ENCODE measurements at regions of chr10 and their contacts with region 1.

Region 1: DNA sequence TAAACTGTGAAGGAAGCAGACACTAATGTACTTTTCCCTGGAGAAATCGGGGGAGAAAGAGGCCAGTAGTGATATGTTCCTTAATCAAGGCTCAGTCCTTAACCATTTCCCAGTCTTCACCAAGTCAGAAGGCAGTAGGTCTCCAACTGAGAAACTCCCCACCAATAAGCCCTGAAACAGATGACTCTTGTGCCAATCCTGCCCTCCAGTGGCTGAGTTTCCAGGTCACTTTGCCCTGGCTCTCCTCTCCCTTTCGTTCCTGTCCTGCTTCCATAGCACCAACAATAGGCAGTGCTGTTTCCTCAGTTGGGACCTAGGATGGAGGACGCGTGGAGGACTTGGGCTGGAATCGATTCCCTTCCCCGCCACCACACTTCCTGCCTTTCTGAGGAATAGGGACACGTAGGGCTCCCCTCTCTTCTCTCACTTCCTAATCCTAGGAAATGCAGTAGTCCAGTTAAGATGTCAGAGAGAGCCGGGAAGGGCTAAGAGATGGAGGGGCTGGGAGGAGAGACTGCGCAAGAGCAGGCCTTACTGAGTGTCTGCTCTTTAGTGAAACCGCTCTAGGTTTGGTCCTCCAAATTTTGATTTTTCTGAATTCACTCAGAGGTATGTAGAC is 23.4 kb downstream of the ATOH7 start:
- DNase-seq: peak; percentile 81
- ATAC-seq: peak; percentile 97
- H3K4me3 ChIP-seq: no peak overlapping the region
- H3K27ac ChIP-seq: no peak overlapping the region
- H3K4me1 ChIP-seq: peaks cover 0 to 7% of the 10 kb centered on the region in 2 experiments; a peak in 1 of 4 replicates
- H3K27me3 ChIP-seq: no peaks in the 10 kb centered on the region
- CTCF ChIP-seq: peak; percentile 79 to 95 (median 80)
- POLR2A ChIP-seq: no peak
- RAD21 ChIP-seq: peak; percentile 98

Region 2: DNA sequence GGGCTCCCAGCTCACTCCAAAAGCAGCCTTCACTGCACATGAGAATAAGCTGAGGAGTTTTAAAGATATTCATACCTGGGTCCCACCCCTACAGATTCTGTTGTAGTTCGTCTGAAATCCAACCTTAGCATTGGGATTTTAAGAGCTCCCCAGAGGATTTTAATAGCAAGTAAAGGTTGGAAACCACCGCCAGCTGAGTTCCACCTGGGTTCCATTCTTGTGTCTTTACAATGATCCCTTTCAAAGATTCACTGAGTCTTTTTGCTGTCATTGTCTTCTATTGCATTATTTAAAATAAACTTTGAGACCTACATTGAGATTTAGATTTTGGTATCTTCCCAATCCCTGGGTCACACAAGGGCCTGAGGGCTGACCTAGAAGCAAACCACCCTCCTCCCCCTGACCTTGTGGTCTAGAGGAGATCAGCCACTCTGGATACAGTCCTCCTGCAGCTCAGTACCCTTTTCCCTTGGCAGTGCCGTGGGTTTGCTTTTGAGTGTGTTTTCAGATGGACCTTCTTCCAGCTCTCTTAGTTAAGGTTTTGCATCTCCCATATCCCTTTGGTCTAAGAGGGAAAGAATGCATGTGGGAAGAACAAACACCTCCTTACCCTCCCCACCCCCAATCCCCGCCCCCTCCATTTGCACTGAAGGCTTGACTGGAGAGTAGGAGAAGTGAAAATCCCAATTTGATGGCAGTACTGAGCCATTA is 346.6 kb before region 1 on chr10:
- CTCF ChIA-PET with region 1: interaction called, 16 read pairs
- POLR2A ChIA-PET with region 1: no interaction called
- RAD21 ChIA-PET with region 1: no interaction called
- intact Hi-C with region 1: no loop called
- DNase-seq: no peak
- ATAC-seq: no peak
- H3K4me3 ChIP-seq: no peak overlapping the region
- H3K27ac ChIP-seq: no peak overlapping the region
- H3K4me1 ChIP-seq: no peaks in the 10 kb centered on the region
- H3K27me3 ChIP-seq: no peaks in the 10 kb centered on the region
- CTCF ChIP-seq: no peak
- POLR2A ChIP-seq: no peak
- RAD21 ChIP-seq: no peak

Region 3: GRCh38 chr10:68223535-68224165 is 15.1 kb after region 1 on chr10:
- CTCF ChIA-PET with region 1: interaction called, 13 read pairs
- POLR2A ChIA-PET with region 1: no interaction called
- RAD21 ChIA-PET with region 1: no interaction called
- intact Hi-C with region 1: no loop called
- DNase-seq: no peak
- ATAC-seq: peak; percentile 94
- H3K4me3 ChIP-seq: no peak overlapping the region
- H3K27ac ChIP-seq: no peak overlapping the region
- H3K4me1 ChIP-seq: no peaks in the 10 kb centered on the region
- H3K27me3 ChIP-seq: no peaks in the 10 kb centered on the region
- CTCF ChIP-seq: peak; percentile 10 to 44 (median 36); a peak in 3 of 6 replicates
- POLR2A ChIP-seq: no peak
- RAD21 ChIP-seq: peak; percentile 27; the same call in 1 of the 2 replicates

Region 4: GRCh38 chr10:68301790-68302502 is 93.4 kb after region 1 on chr10:
- CTCF ChIA-PET with region 1: interaction called, 69 read pairs
- POLR2A ChIA-PET with region 1: no interaction called
- RAD21 ChIA-PET with region 1: interaction called, 7 to 12 read pairs
- intact Hi-C with region 1: loop called (anchors 1 kb)
- DNase-seq: peak; percentile 49
- ATAC-seq: peak; percentile 90
- H3K4me3 ChIP-seq: no peak overlapping the region
- H3K27ac ChIP-seq: no peak overlapping the region
- H3K4me1 ChIP-seq: no peaks in the 10 kb centered on the region
- H3K27me3 ChIP-seq: no peaks in the 10 kb centered on the region
- CTCF ChIP-seq: peak; percentile 46 to 75 (median 61)
- POLR2A ChIP-seq: no peak
- RAD21 ChIP-seq: peak; percentile 81

Measured in HCT116 (cell line).